WTC11 (cell line): ENCODE measurements at regions of chr9 and their contacts with region 1.

Region 1: GRCh38 chr9:85899388-85899787 is 41.6 kb upstream of the NAA35 start:
- DNase-seq: no peak
- ATAC-seq: no peak
- H3K4me3 Mint-ChIP-seq: no peak overlapping the region
- H3K27ac Mint-ChIP-seq: no peak overlapping the region
- H3K4me1 Mint-ChIP-seq: no peaks in the 10 kb centered on the region
- H3K27me3 Mint-ChIP-seq: no peaks in the 10 kb centered on the region
- CTCF ChIP-seq: no peak

Region 2: GRCh38 chr9:86046930-86047341 is 147.5 kb after region 1 on chr9:
- CTCF ChIA-PET with region 1: no interaction called
- POLR2A ChIA-PET with region 1: interaction called, 13 read pairs
- DNase-seq: no peak
- ATAC-seq: peak; percentile 39; the same call in 1 of the 2 replicates
- H3K4me3 Mint-ChIP-seq: no peak overlapping the region
- H3K27ac Mint-ChIP-seq: peak overlapping the region; percentile 41; the same call in 1 of the 2 replicates
- H3K4me1 Mint-ChIP-seq: 0 out of 2 replicates have a peak, but pooled peaks cover 3% of the 10 kb centered on the region
- H3K27me3 Mint-ChIP-seq: no peaks in the 10 kb centered on the region
- CTCF ChIP-seq: no peak